Ovary (tissue), 10 donors: ENCODE measurements at regions of chr3 and their contacts with region 1.

Region 1: DNA sequence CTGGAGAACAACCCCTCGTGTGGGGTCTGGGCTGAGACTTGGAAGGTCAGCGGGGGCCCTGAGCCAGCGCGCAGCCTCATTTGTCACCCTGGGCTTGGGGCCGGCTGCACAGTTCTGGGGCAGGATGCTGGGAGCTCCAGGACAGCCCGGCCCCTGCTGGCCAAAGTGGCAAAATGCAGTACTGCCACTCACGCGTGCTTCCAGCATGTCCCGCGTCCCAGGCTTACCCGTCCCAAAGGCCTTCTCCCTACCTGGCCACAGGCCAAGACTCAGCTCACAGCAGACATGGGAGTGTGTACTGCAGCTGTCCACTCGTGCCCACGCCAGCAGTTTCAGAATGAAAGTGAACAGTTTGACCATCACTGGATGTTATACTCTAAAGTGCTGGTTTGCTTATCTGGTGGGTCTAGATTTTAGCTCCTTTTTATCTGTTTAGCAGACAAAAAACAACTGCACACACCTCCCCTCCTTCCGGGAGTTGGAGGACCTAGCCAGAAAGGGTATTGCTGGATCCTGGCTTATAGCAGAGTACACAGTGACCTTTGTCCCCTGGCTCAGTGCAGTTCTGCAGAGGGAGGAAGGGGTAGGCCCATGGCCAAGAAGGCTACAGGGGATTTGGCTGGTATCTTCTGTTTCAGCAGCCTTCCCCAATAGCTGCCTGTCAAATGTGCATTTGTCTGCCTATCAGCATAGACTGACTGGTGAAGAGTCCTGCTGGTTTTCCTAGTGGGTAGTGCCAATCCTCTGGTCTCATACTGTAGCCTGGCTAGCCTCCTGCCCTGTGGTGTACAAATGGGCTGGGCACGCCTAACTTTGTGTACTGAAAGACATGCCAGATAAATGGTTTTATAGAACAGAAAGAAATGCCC is 23.2 kb upstream of the IP6K2 start:
- DNase-seq: peak; percentile 84 to 91 (median 89)
- H3K4me3 ChIP-seq: no peak overlapping the region
- H3K27ac ChIP-seq: peak overlapping the region; percentile 17 to 20
- H3K4me1 ChIP-seq: peaks cover 10% of the 10 kb centered on the region
- H3K27me3 ChIP-seq: no peaks in the 10 kb centered on the region
- CTCF ChIP-seq: peak; percentile 57 to 84 (median 74)
- EP300 ChIP-seq: no peak
- POLR2A ChIP-seq: no peak

Region 2: GRCh38 chr3:47950453-47951169 is 789.6 kb before region 1 on chr3:
- intact Hi-C with region 1: no loop called
- DNase-seq: no peak
- H3K4me3 ChIP-seq: no peak overlapping the region
- H3K27ac ChIP-seq: no peak overlapping the region
- H3K4me1 ChIP-seq: peaks cover 3% of the 10 kb centered on the region
- H3K27me3 ChIP-seq: no peaks in the 10 kb centered on the region
- CTCF ChIP-seq: no peak
- EP300 ChIP-seq: no peak
- POLR2A ChIP-seq: no peak

Region 3: DNA sequence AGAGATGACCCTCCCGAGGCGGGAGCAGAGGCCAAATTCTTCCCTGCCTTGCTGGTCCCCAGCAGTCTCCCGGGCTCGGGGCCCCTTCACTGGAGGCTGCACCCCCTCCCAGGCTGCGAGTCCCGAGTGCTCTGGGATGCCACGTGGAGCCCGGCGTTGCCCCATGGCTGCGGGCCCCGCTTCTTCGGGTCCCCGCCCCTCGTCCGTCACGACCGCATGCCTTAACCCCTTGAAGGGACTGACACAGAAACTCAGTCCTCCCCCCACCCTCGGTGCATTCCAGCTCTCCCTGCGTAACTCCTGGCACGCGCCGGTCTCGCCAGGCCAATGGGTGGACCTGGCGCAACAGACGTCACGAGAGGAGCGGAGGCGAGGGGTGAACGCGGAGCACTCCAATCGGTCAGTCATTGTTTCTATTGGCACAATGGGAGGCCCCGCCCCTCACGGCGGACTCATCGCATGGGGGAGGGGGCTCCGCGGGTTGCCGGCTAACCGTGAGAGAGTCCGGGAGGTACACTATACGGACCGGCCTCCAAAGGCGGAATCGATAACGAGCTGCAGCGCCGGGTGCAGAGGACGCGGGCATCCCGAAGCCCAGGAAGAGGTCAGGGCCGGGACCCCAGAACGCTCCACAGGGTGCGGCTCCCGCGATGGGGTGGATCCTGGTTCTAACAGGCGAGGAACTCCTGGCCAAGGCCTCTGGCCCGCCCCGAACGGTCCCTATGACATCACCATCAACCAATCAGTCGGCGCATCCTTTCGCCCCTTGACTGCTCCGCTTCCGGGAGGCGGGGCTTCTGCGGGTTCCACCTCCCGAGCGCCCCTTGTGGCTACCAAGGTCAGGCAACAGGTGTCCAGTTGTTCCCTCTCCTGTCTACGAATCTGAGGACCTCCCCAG is 76.5 kb before region 1 on chr3:
- intact Hi-C with region 1: no loop called
- DNase-seq: peak; percentile 76 to 94 (median 86)
- H3K4me3 ChIP-seq: peak overlapping the region; percentile 44
- H3K27ac ChIP-seq: peak overlapping the region in 1 of 2 donors; percentile 60
- H3K4me1 ChIP-seq: peaks cover 8% of the 10 kb centered on the region
- H3K27me3 ChIP-seq: no peaks in the 10 kb centered on the region
- CTCF ChIP-seq: peak; percentile 28 to 62 (median 40)
- EP300 ChIP-seq: peak; percentile 39
- POLR2A ChIP-seq: peak; percentile 35

Region 4: GRCh38 chr3:48847504-48848423 is 107.6 kb after region 1 on chr3 and contains the start of gene PRKAR2A:
- intact Hi-C with region 1: loop called in 1 of 4 experiments (anchors 5 kb)
- DNase-seq: peak; percentile 87 to 93 (median 90)
- H3K4me3 ChIP-seq: peak within 1 kb of the TSS; percentile 92
- H3K27ac ChIP-seq: peak within 1 kb of the TSS; percentile 81 to 84
- H3K4me1 ChIP-seq: peaks cover 7% of the 10 kb centered on the region
- H3K27me3 ChIP-seq: no peaks in the 10 kb centered on the region
- CTCF ChIP-seq: peak in 1 of 3 donors; percentile 25
- EP300 ChIP-seq: no peak
- POLR2A ChIP-seq: peak; percentile 89
- total RNA-seq, gene PRKAR2A: 18.6 to 52.6 (median 46.3) TPM